ENCODE measurements at regions of chr10 and their contacts with region 1.

Region 1: GRCh38 chr10:122980209-122981065 is at the start of gene PSTK:
- DNase-seq: peak; percentile 97
- ATAC-seq: peak; percentile 99
- total RNA-seq, gene PSTK: 1.5 TPM

Region 2: DNA sequence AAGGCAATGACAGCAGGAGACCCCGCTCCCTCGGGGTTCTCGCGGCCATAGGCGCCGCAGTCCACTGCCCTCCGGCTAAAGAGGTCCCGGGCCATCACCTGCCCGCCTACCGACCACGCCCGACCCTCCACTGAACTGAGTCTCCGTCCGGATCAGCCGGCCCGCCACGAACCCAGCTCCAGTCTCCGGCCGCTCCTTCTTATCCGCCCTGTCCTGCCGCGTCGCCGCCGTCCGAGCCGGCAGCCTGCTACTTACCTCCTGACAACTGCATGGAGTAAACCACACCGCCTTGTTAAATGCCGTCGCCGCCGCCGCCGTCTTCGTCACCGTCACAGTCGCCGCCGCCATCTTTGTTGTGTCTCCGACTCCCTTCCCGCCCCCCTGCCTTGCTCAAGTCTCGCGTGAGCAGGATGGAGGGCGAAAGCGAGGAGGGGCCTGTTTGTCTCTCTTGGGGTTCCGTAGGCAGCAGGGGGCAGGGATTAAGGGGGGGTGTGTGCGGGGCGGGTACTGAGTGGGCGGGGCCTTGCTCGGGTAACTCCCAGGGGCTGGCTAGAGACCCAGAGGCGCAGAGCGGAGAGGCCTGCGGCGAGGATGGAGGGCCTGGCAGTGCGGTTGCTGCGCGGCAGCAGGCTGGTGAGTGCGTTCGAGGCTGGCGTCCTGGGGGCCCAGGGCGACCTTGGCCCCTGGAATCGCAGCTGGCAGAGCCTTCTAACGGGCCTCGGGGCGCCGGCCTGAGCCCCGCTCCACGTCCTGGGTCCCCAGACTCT is 28.2 kb after region 1 on chr10 and contains the starts of genes ACADSB and IKZF5:
- intact Hi-C with region 1: loop called (anchors 1 kb)
- DNase-seq: peak; percentile 97
- ATAC-seq: peak; percentile 99
- total RNA-seq, gene ACADSB: 72.9 TPM
- total RNA-seq, gene IKZF5: 12.0 TPM

Region 3: DNA sequence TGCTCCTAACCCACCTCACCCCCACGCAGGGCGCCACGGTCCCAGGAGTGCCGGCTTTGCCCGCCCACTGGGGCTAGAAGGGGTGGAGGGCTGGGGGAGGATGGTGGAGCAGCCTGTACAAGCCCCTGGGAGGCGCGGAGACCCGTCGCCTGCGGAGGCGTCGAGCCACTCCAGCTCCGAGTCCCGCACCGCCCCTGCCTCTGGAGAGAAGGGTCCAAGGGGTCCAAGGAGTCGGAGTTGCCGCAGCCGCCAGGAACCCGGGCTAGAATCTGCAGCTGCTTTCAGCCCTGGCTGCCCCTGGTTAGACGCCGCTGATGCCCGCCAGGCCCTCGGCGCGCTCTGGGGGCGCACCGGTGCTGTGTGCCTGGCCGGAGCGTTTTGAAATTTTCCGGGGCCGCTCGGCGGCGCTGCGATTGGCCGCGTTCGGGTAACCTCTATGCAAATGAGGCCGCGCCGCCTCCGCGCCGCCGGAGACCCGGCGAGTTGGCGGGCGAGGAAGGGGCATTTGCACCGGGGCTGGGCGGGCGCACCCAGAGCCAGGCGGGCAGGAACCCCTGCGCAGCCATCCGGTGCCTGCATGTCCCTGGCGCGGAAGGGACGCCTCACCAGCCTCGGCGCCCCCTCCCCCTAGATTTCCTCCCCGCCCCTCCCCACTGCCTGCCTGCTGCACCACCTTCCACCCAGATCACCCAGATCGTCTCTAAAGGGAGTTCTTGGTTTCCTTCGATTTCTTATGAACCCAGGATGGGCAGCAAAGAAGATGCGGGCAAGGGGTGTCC is 167.4 kb after region 1 on chr10 and contains the start of gene HMX2:
- intact Hi-C with region 1: no loop called
- DNase-seq: no peak
- ATAC-seq: no peak
- total RNA-seq, gene HMX2: not detected

Region 4: GRCh38 chr10:123472606-123473005 is 492.2 kb after region 1 on chr10:
- intact Hi-C with region 1: no loop called
- DNase-seq: no peak
- ATAC-seq: no peak

Measured in Right ventricle myocardium inferior (tissue), 1 donor.